T-cell (primary cell): ENCODE measurements at regions of chr9 and their contacts with region 1.

Region 1: GRCh38 chr9:114603248-114603647 is 7.8 kb upstream of the TMEM268 start:
- DNase-seq: no peak
- ATAC-seq: no peak
- H3K4me3 ChIP-seq: no peak overlapping the region
- H3K4me3 Mint-ChIP-seq: no peak overlapping the region
- H3K27ac ChIP-seq: no peak overlapping the region
- H3K27ac Mint-ChIP-seq: peak overlapping the region in 1 of 2 donors; percentile 13
- H3K4me1 ChIP-seq: no peaks in the 10 kb centered on the region
- H3K4me1 Mint-ChIP-seq: peaks cover 2 to 17% (median 5%) of the 10 kb centered on the region in 3 donors
- H3K27me3 ChIP-seq: no peaks in the 10 kb centered on the region
- H3K27me3 Mint-ChIP-seq: no peaks in the 10 kb centered on the region

Region 2: DNA sequence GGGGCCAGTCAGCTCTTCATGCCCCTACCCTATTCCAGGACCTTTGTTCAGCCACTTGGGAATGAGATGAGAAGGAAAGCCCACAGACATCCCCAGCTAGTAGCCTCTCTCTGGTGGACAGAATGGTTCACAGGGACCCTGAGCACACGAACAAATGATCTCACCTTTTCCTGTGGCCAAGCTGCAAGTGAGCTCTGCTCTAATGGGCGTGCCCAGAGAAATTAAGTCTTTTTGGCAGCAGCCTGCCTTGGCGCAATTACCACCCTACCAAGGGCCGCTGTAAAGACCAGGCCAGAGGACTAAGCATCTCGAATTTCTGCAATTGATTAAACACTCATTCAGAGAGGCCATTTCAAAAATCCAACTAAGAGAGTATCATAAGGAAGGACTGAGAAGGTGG is 154.0 kb before region 1 on chr9:
- CTCF ChIA-PET with region 1: no interaction called
- POLR2A ChIA-PET with region 1: interaction called in 1 of 2 experiments, 15 read pairs
- DNase-seq: no peak
- ATAC-seq: no peak
- H3K4me3 ChIP-seq: no peak overlapping the region
- H3K4me3 Mint-ChIP-seq: no peak overlapping the region
- H3K27ac ChIP-seq: no peak overlapping the region
- H3K27ac Mint-ChIP-seq: no peak overlapping the region
- H3K4me1 ChIP-seq: peaks cover 4 to 25% of the 10 kb centered on the region in 2 experiments
- H3K4me1 Mint-ChIP-seq: peaks cover 26 to 29% (median 26%) of the 10 kb centered on the region in 3 donors
- H3K27me3 ChIP-seq: no peaks in the 10 kb centered on the region
- H3K27me3 Mint-ChIP-seq: no peaks in the 10 kb centered on the region